Mammary epithelial cell (primary cell): ENCODE measurements at regions of chr20 and their contacts with region 1.

Region 1: GRCh38 chr20:41249406-41250281 is 67.9 kb downstream of the ZHX3 start:
- DNase-seq: peak; percentile 78
- H3K4me3 ChIP-seq: no peak overlapping the region
- H3K27ac ChIP-seq: peak overlapping the region; percentile 69
- H3K4me1 ChIP-seq: peaks cover 22% of the 10 kb centered on the region
- H3K27me3 ChIP-seq: no peaks in the 10 kb centered on the region
- CTCF ChIP-seq: peak in 1 of 2 donors; percentile 1

Region 2: DNA sequence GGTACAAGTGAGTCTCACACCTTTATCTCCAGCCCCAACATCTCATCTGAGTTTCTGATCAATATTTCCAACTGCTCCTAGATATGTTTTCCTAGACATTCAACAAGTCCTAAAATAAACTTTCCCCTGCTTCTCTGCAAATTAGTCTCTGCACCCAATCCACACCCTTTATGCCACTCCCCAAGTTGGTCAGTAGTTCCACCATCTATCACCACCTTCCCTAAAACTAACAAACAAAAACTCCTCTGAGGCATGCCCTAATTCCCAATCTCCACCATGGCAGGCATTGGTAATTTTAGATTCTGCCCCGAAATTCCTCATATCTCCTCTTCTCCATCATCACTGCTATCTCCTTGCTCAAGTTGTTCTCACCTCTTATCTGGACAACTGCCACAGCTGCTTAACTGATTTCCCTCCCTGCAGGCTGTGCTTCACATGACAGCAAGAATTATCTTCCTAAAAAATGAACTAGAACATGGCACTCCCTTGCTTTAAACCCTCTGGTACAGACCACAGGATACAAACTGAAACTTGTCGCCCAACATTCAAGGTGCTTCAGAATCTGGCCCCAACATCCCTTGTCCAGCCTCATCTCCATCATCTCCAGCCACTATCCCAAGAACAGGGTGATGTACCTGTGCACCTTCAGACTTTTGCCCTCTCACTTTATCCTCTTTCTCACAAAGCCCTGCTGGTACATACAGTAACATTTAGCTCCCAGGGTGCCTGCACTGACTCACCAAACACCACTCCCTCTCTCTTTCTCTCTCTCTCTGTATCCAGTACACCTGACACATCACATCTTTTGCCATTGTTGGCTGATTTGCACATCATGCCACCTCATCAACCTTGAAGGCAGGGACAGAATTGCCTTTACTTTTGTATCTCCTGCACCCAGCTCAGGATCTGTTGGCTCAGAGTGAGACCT is 12.4 kb after region 1 on chr20:
- CTCF ChIA-PET with region 1: no interaction called
- dilution Hi-C with region 1: no loop called
- in situ Hi-C with region 1: no loop called
- intact Hi-C with region 1: loop called (anchors 1 kb)
- DNase-seq: peak; percentile 81
- H3K4me3 ChIP-seq: no peak overlapping the region
- H3K27ac ChIP-seq: peak overlapping the region; percentile 15
- H3K4me1 ChIP-seq: peaks cover 6% of the 10 kb centered on the region
- H3K27me3 ChIP-seq: no peaks in the 10 kb centered on the region
- CTCF ChIP-seq: no peak

Region 3: DNA sequence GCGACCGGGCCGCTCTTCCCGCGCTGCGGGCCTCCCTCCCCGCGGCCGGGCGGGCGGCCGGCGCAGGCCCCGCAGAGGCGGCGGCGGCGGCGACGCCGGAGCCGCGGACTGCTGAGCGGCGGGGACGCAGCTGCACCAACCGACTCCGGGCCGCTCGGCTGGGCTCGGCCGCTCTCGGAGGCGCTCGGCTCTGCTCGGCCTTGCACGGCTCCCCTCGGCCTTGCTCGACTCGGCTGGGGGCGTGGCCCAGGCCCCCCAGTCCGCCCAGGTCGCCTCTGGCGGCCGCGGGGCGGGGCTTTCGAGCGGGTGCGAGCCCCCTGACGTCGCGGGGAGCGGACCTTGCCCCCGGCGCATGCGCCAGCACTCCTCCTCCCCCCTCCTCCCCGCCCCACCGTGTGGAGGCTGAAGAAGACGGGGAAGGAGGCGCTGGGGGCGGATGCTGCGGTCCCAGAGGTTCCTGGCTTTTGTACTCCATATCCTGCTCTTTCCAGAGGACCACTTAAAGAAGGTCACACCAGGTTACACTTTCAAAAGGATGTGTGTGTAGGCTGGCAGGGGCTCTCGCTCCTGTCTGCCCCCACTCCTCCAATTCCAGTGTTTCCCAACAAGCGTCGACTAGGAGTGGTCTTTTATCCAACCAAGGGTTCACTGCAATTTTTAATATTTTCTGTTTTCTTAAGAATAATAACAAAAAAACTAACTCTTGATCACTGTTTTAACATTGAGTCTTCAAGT is 68.1 kb after region 1 on chr20 and contains the start of gene ZHX3:
- CTCF ChIA-PET with region 1: no interaction called
- dilution Hi-C with region 1: no loop called
- in situ Hi-C with region 1: no loop called
- intact Hi-C with region 1: loop called (anchors 5 kb)
- DNase-seq: peak; percentile 95
- H3K4me3 ChIP-seq: peak within 1 kb of the TSS; percentile 79 to 94 (median 79)
- H3K27ac ChIP-seq: peak within 1 kb of the TSS; percentile 92
- H3K4me1 ChIP-seq: peaks cover 16% of the 10 kb centered on the region
- H3K27me3 ChIP-seq: no peaks in the 10 kb centered on the region
- CTCF ChIP-seq: no peak
- total RNA-seq, gene ZHX3: 27.0 to 39.7 TPM